ENCODE measurements at regions of chr5 and their contacts with region 1.

Region 1: GRCh38 chr5:88845081-88845697 is 37.8 kb downstream of the MEF2C start:
- DNase-seq: peak; percentile 73
- ATAC-seq: peak; percentile 82
- H3K4me3 ChIP-seq: no peak overlapping the region
- H3K27ac ChIP-seq: peak overlapping the region; percentile 56
- H3K4me1 ChIP-seq: peaks cover 3% of the 10 kb centered on the region; the same call in 1 of the 2 replicates
- H3K27me3 ChIP-seq: no peaks in the 10 kb centered on the region
- CTCF ChIP-seq: no peak
- EP300 ChIP-seq: peak; percentile 77 to 98
- POLR2A ChIP-seq: no peak
- RAD21 ChIP-seq: no peak

Region 2: DNA sequence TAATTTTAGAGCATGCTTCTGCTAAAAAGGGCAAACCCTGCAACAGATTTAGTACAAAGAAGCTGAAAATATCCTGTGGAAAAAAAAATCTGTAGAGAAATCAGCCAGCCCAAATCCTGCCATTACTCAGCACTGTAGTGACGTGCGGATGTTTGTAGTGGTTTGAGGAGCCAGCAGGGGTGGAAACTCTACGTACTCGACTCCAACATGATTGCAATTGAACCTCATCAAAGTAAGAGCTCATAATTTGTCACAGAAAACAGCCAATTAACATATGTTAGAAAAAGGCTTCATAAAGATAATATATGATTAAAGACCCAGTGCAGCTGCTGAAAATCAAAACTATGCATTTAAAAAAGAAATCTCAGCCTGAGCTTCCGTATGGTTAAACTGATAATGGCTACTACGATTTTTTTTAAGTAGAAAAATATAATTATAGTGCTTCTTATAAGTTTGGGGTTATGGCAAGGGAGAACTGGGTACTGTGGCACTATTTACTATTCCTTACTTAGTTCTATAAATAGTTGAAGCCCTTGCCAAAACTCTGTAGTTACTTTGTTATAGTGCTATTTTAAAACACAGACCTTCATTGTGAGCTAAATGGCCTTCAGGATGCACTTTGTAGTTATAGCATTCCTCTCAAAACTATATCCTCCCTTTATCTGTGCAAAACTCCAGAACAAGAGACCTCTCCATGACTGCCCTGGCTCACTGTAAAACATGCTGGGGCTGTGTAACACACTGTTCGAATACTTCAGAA is 11.6 kb before region 1 on chr5:
- CTCF ChIA-PET with region 1: interaction called, 12 read pairs
- POLR2A ChIA-PET with region 1: interaction called, 5 read pairs
- RAD21 ChIA-PET with region 1: interaction called, 5 read pairs
- SMC1A ChIA-PET with region 1: interaction called, 12 read pairs
- in situ Hi-C with region 1: no loop called
- intact Hi-C with region 1: no loop called
- DNase-seq: no peak
- ATAC-seq: peak; percentile 65
- H3K4me3 ChIP-seq: peak overlapping the region; percentile 39; the same call in 1 of the 2 replicates
- H3K27ac ChIP-seq: peak overlapping the region; percentile 80
- H3K4me1 ChIP-seq: peaks cover 36% of the 10 kb centered on the region
- H3K27me3 ChIP-seq: no peaks in the 10 kb centered on the region
- CTCF ChIP-seq: no peak
- EP300 ChIP-seq: peak in 1 of 2 experiments; percentile 39; a peak in 1 of 4 replicates
- POLR2A ChIP-seq: no peak
- RAD21 ChIP-seq: no peak